ENCODE measurements at regions of chr1 and their contacts with region 1.

Region 1: DNA sequence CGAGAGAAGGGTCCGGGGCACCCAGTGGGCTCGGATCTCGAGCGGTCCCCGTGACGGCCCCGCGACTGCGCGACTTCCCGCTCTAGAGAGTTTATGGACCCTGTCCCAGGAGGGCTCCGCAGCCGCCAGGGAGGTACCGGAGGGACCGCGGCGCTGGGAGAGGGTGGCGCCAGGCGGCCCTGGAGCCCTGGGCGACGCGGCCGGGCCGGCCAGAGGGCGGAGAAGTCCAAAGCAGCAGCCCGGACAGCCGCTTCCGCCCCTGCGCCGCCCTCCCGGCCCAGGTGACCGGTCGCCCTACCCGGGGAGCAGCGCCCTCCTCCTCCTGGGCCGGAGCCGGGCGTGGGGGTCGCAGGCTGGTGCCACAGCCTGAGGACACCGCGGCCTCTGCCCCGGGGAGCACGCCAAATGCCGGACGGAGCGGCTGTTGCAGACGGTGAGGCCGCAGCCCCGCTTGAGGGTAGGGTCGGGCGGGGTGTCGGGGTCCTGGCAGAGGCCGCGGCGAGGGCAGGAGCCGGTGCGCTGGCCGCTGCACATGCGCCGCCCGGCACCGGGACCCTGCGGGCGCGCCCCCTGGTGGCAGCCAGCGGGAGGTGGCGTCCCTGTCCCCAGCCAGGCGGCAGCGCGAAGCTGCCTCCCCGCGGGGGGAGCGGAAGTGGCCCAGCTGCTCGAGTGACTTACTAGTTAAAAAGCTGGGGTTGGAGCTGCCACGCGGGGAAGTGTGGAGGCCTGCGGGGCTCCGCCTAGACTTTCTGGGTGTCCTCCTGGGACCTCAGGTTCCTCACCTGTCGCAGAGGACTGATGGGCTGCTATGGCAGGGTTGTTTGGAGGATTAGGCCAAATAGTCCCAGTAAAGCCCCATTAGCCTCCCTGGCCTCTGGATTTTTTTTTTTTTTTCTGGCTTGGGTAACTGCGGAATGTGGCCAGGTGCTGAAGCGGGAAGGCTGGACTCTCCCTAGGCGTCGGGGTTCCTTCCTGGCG is 20.9 kb upstream of the ZNF678 start:
- DNase-seq: peak; percentile 79 to 92 (median 87)
- ATAC-seq: peak; percentile 97
- H3K4me3 ChIP-seq: peak overlapping the region; percentile 44 to 74
- H3K4me3 Mint-ChIP-seq: peak overlapping the region; percentile 57 to 69 (median 67)
- H3K27ac ChIP-seq: peak overlapping the region; percentile 52
- H3K27ac Mint-ChIP-seq: peak overlapping the region in 1 of 2 donors; percentile 11
- H3K4me1 ChIP-seq: peaks cover 0 to 19% of the 10 kb centered on the region in 2 experiments
- H3K4me1 Mint-ChIP-seq: peaks cover 5 to 7% (median 6%) of the 10 kb centered on the region in 3 donors
- H3K27me3 ChIP-seq: peaks cover 0 to 15% of the 10 kb centered on the region in 2 experiments
- H3K27me3 Mint-ChIP-seq: peaks cover 3 to 4% of the 10 kb centered on the region in 2 donors

Region 2: DNA sequence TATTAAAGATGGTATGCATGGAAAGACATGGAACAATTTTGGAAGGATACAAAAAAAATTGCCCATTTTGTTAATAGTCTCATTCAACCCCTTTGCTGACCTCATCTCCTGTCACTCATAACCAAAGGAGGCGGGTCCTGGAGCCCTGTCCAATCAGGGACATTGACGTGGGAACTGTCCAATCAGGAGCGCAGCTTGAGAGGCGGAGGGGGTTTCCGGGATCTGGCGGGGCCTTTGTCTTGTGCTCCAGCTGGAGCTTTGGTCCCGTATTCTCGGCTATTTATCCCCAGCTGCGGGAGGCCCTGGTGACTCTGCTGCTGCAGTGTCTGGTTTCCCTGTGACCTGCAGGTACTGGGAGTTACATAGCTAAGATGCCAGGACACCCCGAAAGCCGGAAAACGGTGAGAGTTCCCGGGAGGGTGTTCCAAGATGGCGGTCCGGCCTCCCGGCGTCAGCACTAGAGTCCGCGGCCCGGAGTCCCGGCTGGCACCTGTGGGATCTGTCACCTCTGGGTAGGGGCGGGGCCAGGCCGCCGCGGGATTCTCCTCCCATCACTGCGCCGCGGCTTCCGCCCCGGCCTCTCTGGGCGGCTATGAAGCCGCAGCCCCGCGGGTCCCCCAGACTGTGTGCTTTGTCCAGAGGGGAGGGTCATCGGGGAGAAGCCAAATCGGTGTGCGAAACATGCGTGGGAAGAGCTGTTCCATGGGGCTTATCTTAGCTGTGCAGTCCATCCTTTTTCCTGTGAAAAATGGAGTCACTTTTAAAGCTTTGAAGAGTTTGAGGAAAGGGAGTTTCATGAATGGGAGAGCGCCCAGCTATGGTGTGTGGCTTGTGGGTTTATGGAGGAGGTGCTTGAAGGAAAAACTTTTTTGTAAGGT is 21.1 kb after region 1 on chr1 and contains the start of gene ZNF678:
- CTCF ChIA-PET with region 1: interaction called, 3 to 15 read pairs
- POLR2A ChIA-PET with region 1: no interaction called
- DNase-seq: peak; percentile 71 to 92 (median 82)
- ATAC-seq: peak; percentile 88 to 95 (median 94)
- H3K4me3 ChIP-seq: peak within 1 kb of the TSS; percentile 89 to 91
- H3K4me3 Mint-ChIP-seq: peak within 1 kb of the TSS; percentile 88 to 97 (median 88)
- H3K27ac ChIP-seq: peak within 1 kb of the TSS; percentile 78
- H3K27ac Mint-ChIP-seq: peak within 1 kb of the TSS; percentile 79 to 84
- H3K4me1 ChIP-seq: peaks cover 6 to 30% of the 10 kb centered on the region in 2 experiments
- H3K4me1 Mint-ChIP-seq: peaks cover 30 to 52% (median 42%) of the 10 kb centered on the region in 3 donors
- H3K27me3 ChIP-seq: peaks cover 0 to 38% of the 10 kb centered on the region in 2 experiments
- H3K27me3 Mint-ChIP-seq: peaks cover 24 to 26% of the 10 kb centered on the region in 2 donors
- total RNA-seq, gene ZNF678: 7.2 to 8.8 (median 7.4) TPM

Measured in T-cell (primary cell).